ENCODE measurements at regions of chr2 and their contacts with region 1.

Region 1: DNA sequence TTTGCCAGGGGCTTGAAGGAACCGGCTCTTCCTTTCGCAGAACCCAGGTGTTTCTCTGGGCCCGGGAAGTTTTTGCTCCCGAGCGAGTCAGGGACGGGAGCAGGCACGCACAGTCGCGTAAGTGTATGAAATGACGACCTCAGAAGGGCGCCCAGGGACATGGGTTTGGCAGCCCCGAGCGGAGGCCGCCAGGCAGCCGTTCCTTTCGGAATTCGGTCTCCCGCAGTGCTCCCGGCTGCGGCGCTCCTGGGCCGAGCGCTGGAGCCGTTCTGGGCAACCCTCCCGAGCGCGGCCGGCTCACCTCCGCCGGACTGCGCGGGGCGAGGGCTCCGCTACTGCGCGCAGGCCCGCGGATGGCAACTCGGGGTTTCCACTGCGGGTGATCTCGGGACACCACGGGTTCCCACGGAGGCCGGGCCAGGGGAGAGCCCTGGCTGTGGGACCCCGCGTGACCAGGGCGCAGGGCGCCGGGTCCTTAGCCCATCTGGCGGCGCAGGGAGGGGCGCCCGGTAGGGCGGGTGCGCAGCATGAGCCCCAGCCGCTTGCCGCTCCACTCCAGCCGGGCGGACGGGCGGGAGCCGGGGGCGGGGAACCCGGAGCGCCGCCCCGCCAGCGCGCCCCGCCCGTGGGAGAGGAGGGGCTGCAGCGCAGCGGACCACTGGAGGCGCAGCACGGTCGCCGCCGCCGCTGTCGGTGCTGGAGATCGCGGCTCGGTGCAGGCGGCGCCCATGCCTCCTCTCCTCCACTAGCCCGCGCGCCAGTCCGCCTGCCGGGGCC is at the start of gene OSBPL6:
- DNase-seq: peak; percentile 86 to 93
- ATAC-seq: peak; percentile 92 to 94 (median 92)
- H3K4me3 ChIP-seq: peak within 1 kb of the TSS; percentile 97
- H3K27ac ChIP-seq: peak within 1 kb of the TSS; percentile 95
- H3K4me1 ChIP-seq: peaks cover 20% of the 10 kb centered on the region
- H3K27me3 ChIP-seq: no peaks in the 10 kb centered on the region
- CTCF ChIP-seq: peak; percentile 47
- total RNA-seq, gene OSBPL6: 29.8 to 147 (median 44.4) TPM

Region 2: GRCh38 chr2:178112202-178113152 is 81.5 kb before region 1 on chr2 and contains the start of gene RBM45:
- intact Hi-C with region 1: loop called in 1 of 2 experiments (anchors 5 kb)
- DNase-seq: peak; percentile 95 to 97
- ATAC-seq: peak; percentile 97 to 98 (median 98)
- H3K4me3 ChIP-seq: peak within 1 kb of the TSS; percentile 93
- H3K27ac ChIP-seq: peak within 1 kb of the TSS; percentile 77
- H3K4me1 ChIP-seq: peaks cover 14% of the 10 kb centered on the region
- H3K27me3 ChIP-seq: no peaks in the 10 kb centered on the region
- CTCF ChIP-seq: peak; percentile 98
- total RNA-seq, gene RBM45: 4.4 to 6.5 (median 4.8) TPM

Region 3: DNA sequence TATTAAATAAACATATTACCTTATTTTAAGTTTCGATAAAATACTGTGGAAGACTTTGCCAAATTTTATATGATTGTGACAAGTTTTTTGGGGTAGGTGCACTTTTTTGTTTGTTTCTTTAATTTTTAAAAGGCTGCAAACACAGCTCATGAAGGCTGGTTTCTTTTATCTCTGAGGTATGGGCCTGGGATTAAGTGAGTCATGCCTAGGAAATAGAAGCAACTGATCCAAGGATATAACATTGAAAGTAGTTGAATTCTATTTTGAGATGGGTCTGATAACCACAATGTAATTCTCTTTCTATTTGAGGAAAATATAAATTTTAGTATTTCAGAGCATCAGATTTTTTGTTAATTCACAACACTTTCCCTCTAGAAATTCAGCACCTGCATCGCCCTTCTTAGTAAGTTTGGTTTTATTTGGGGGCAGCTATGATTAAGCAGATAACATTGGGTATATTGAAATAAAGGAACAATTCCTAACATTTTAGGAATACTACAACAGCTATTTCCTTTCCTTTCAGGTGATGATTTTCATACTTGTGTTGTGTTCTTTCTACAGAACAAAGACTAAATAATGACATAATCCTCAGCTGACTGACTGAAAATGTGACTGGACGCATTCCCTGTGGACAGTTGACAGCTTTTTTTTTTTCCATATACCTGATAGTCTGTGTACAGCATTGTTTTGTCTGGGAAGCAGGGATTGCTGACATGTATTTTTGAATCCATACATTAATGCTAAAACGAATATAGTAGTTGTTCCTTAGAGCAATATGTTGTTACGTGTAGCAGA is 65.0 kb before region 1 on chr2:
- intact Hi-C with region 1: loop called in 1 of 2 experiments (anchors 5 kb)
- DNase-seq: no peak
- ATAC-seq: peak; percentile 42 to 83 (median 62)
- H3K4me3 ChIP-seq: no peak overlapping the region
- H3K27ac ChIP-seq: peak overlapping the region; percentile 40
- H3K4me1 ChIP-seq: peaks cover 11% of the 10 kb centered on the region
- H3K27me3 ChIP-seq: no peaks in the 10 kb centered on the region
- CTCF ChIP-seq: no peak

Region 4: GRCh38 chr2:178142274-178143065 is 51.5 kb before region 1 on chr2:
- intact Hi-C with region 1: loop called in 1 of 2 experiments (anchors 5 kb)
- DNase-seq: no peak
- ATAC-seq: peak; percentile 57 to 94 (median 83)
- H3K4me3 ChIP-seq: peak overlapping the region; percentile 37
- H3K27ac ChIP-seq: peak overlapping the region; percentile 56
- H3K4me1 ChIP-seq: no peaks in the 10 kb centered on the region
- H3K27me3 ChIP-seq: no peaks in the 10 kb centered on the region
- CTCF ChIP-seq: no peak

Region 5: DNA sequence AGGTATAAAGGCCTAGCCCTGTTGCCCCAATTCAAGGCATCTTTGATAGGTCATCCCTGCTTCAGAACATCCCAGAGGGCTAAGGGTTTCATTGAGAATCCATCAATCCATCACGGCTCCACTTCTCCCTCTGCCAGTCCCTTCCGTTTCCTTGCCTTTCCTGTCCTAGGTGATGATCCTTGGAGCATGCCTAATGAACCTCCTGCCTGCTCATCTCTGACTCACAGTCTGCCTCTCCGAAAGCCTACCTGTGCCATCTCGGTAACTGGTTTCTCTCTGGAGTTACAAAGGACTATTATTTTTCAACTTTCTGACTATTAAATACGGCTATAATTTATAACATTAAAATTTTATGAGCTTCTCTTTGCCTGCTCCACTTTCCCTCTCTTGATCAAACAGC is 36.4 kb before region 1 on chr2:
- intact Hi-C with region 1: no loop called
- DNase-seq: no peak
- ATAC-seq: no peak
- H3K4me3 ChIP-seq: no peak overlapping the region
- H3K27ac ChIP-seq: no peak overlapping the region
- H3K4me1 ChIP-seq: no peaks in the 10 kb centered on the region
- H3K27me3 ChIP-seq: no peaks in the 10 kb centered on the region
- CTCF ChIP-seq: no peak

Region 6: DNA sequence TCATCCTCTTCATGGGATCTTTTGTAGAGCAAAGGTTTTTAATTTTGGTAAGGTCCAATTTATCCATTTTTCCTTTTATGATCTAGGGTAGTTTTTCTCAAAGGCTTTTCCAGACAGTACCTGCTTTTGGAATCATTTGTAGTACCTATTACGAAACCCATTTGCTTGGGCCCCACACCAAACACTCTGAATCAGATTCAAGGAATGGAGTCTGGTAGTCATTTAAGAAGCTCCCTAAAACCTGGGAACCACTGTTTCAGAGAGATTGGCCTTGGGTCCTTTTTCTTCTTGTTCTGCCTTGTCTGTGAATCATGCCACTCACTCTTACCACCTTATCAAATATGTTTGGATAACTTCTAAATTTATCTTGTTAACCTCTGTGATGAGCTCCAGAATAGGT is 40.6 kb after region 1 on chr2:
- intact Hi-C with region 1: loop called in 1 of 2 experiments (anchors 2 kb)
- DNase-seq: no peak
- ATAC-seq: peak; percentile 36 to 70 (median 48)
- H3K4me3 ChIP-seq: peak overlapping the region; percentile 8
- H3K27ac ChIP-seq: peak overlapping the region; percentile 66
- H3K4me1 ChIP-seq: peaks cover 57% of the 10 kb centered on the region
- H3K27me3 ChIP-seq: no peaks in the 10 kb centered on the region
- CTCF ChIP-seq: no peak

Region 7: DNA sequence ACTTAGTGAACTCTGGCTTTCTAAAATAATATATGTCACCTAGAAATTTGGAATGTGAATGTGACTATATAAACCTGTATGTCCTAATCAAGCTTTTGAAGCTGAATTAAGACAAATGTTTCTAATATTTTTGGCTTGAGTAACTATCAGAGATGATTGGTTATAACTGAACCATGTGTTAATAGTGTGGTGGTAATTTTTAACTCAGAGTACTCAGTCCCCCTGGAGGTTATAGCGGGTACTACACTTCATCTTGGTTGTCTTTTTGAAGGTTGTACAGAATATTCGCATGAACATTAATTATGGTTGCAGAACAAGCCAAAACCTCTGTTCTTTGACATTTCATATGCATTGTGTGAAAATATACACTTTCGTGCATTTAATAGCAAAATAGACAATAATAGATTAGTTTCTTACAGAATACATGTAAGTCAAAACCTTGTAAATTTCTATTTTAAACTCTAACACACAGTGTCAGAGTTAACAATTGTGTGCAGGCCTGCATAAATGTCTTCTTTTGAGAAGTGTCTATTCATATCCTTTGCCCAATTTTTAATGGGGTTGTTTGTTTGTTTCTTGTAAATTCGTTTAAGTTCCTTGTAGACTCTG is 86.3 kb after region 1 on chr2:
- intact Hi-C with region 1: loop called (anchors 1 to 5 kb)
- DNase-seq: no peak
- ATAC-seq: peak; percentile 33 to 76 (median 59)
- H3K4me3 ChIP-seq: no peak overlapping the region
- H3K27ac ChIP-seq: no peak overlapping the region
- H3K4me1 ChIP-seq: peaks cover 50% of the 10 kb centered on the region
- H3K27me3 ChIP-seq: no peaks in the 10 kb centered on the region
- CTCF ChIP-seq: peak; percentile 85

Measured in psoas muscle (tissue), 8 donors.